Dorsolateral prefrontal cortex (tissue), 120 donors: ENCODE measurements at regions of chr12 and their contacts with region 1.

Region 1: GRCh38 chr12:88998421-88998820 is 353.9 kb downstream of the DUSP6 start:
- DNase-seq: no peak
- H3K4me3 ChIP-seq: no peak overlapping the region
- H3K27ac ChIP-seq: no peak overlapping the region
- H3K27me3 ChIP-seq: no peaks in the 10 kb centered on the region
- CTCF ChIP-seq: no peak

Region 2: DNA sequence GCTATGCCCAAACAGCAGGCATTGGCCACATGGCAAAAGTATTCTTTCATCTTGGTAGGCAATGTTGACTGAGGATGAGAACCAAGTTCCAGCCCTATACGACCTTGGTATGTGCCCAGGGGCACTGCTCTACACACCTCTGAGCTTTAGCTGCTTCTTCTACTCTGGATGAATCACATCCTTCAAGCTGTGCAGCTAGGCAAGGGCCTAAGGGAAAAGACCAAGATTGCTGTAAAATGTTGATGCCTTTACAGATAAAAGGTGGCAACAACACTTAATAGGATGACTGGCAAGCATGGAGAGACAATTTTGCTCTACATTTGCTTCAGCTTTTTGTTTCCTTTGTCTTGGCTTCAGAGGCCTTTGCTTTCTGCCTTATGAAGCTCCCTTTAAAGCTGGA is 234.8 kb before region 1 on chr12:
- intact Hi-C with region 1: no loop called
- DNase-seq: no peak
- H3K4me3 ChIP-seq: no peak overlapping the region
- H3K27ac ChIP-seq: no peak overlapping the region
- H3K27me3 ChIP-seq: no peaks in the 10 kb centered on the region
- CTCF ChIP-seq: no peak

Region 3: GRCh38 chr12:88889326-88890110 is 108.9 kb before region 1 on chr12:
- intact Hi-C with region 1: loop called in 1 of 2 experiments (anchors 5 kb)
- DNase-seq: no peak
- H3K4me3 ChIP-seq: no peak overlapping the region
- H3K27ac ChIP-seq: no peak overlapping the region
- H3K27me3 ChIP-seq: no peaks in the 10 kb centered on the region
- CTCF ChIP-seq: no peak